ENCODE measurements at regions of chr3 and their contacts with region 1.

Region 1: GRCh38 chr3:177359593-177360357 is 162.5 kb upstream of the TBL1XR1 start:
- DNase-seq: peak; percentile 95
- ATAC-seq: peak; percentile 85
- H3K4me3 Mint-ChIP-seq: peak overlapping the region; percentile 71
- H3K27ac Mint-ChIP-seq: peak overlapping the region; percentile 95
- H3K4me1 Mint-ChIP-seq: peaks cover 52% of the 10 kb centered on the region
- H3K27me3 Mint-ChIP-seq: no peaks in the 10 kb centered on the region

Region 2: GRCh38 chr3:177050501-177051237 is 309.1 kb before region 1 on chr3:
- CTCF ChIA-PET with region 1: interaction called, 29 read pairs
- POLR2A ChIA-PET with region 1: interaction called, 3 read pairs
- DNase-seq: no peak
- ATAC-seq: peak; percentile 72
- H3K4me3 Mint-ChIP-seq: no peak overlapping the region
- H3K27ac Mint-ChIP-seq: peak overlapping the region; percentile 63
- H3K4me1 Mint-ChIP-seq: peaks cover 13% of the 10 kb centered on the region
- H3K27me3 Mint-ChIP-seq: no peaks in the 10 kb centered on the region

Region 3: GRCh38 chr3:177144923-177145780 is 214.6 kb before region 1 on chr3:
- CTCF ChIA-PET with region 1: interaction called, 11 read pairs
- POLR2A ChIA-PET with region 1: interaction called, 4 read pairs
- DNase-seq: no peak
- ATAC-seq: peak; percentile 69
- H3K4me3 Mint-ChIP-seq: peak overlapping the region; percentile 48
- H3K27ac Mint-ChIP-seq: peak overlapping the region; percentile 77
- H3K4me1 Mint-ChIP-seq: peaks cover 65% of the 10 kb centered on the region
- H3K27me3 Mint-ChIP-seq: no peaks in the 10 kb centered on the region

Region 4: GRCh38 chr3:177197041-177197727 is 162.6 kb before region 1 on chr3 and contains the start of gene TBL1XR1:
- CTCF ChIA-PET with region 1: interaction called, 57 read pairs
- POLR2A ChIA-PET with region 1: interaction called, 172 read pairs
- DNase-seq: peak; percentile 92
- ATAC-seq: peak; percentile 67
- H3K4me3 Mint-ChIP-seq: peak within 1 kb of the TSS; percentile 98
- H3K27ac Mint-ChIP-seq: peak within 1 kb of the TSS; percentile 99
- H3K4me1 Mint-ChIP-seq: peaks cover 66% of the 10 kb centered on the region
- H3K27me3 Mint-ChIP-seq: no peaks in the 10 kb centered on the region
- total RNA-seq, gene TBL1XR1: 165 to 166 TPM

Region 5: DNA sequence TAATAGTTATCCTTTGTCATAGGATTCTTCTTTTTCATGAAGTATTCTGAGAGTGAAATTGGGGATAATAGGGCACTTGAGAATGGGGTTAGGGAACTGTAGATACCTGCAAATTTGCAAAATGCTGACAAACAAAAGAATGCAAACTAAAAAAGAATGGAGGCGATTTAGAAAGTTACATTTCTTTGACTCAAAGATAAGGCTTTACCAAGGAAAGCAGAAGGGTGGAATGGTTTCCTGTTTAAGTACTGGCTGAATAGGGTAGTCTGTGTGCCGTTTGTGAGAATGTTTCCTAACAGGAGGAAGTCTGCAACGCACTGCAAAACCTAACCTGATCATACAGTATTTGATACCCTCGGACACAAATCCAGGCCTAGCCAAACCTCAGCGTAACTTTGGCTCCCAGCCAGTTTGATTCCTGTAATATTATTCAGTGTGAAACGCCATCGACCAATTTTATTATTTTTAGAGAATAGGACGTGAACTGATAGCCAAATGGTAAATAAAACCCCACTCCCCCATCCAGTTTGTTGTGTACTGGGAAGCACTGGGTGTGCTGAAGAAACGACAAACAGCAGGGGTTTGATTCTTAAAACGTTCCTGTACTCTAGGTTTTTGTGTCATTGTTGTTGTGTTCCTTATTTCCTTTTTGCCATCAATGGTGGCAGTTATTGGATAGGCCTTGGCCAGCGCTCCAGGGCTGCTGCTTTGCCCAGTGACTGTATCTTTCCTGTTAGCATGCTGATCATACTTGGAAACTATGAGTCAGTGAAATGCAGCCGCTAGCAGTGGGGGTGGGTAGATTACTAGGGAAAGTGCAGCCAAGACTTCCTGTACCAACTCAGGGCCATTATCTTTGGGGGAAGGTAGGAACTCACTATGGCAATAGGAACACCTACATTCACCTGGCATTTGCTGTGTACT is 14.5 kb before region 1 on chr3:
- CTCF ChIA-PET with region 1: interaction called, 17 read pairs
- POLR2A ChIA-PET with region 1: interaction called, 8 read pairs
- DNase-seq: peak; percentile 78
- ATAC-seq: peak; percentile 95
- H3K4me3 Mint-ChIP-seq: peak overlapping the region; percentile 22
- H3K27ac Mint-ChIP-seq: peak overlapping the region; percentile 84
- H3K4me1 Mint-ChIP-seq: peaks cover 27% of the 10 kb centered on the region
- H3K27me3 Mint-ChIP-seq: no peaks in the 10 kb centered on the region